ENCODE measurements at regions of chr22 and their contacts with region 1.

Region 1: GRCh38 chr22:41857155-41857859 is 24.4 kb downstream of the SREBF2 start:
- DNase-seq: peak; percentile 71 to 89 (median 72)
- H3K4me3 ChIP-seq: no peak overlapping the region
- H3K4me3 Mint-ChIP-seq: peak overlapping the region in 7 of 8 donors; percentile 0 to 64 (median 47)
- H3K27ac ChIP-seq: peak overlapping the region; percentile 40
- H3K27ac Mint-ChIP-seq: peak overlapping the region; percentile 71 to 96 (median 86)
- H3K4me1 ChIP-seq: peaks cover 53% of the 10 kb centered on the region
- H3K4me1 Mint-ChIP-seq: peaks cover 29 to 59% (median 44%) of the 10 kb centered on the region in 4 donors
- H3K27me3 ChIP-seq: no peaks in the 10 kb centered on the region
- H3K27me3 Mint-ChIP-seq: no peaks in the 10 kb centered on the region

Region 2: GRCh38 chr22:40334899-40335298 is 1522.4 kb before region 1 on chr22:
- CTCF ChIA-PET with region 1: no interaction called
- POLR2A ChIA-PET with region 1: no interaction called
- intact Hi-C with region 1: no loop called
- DNase-seq: peak in 4 of 5 donors; percentile 74 to 80 (median 75)
- H3K4me3 ChIP-seq: peak overlapping the region; percentile 8 to 9
- H3K4me3 Mint-ChIP-seq: peak overlapping the region; percentile 69 to 80 (median 76)
- H3K27ac ChIP-seq: peak overlapping the region; percentile 30
- H3K27ac Mint-ChIP-seq: peak overlapping the region; percentile 71 to 94 (median 77)
- H3K4me1 ChIP-seq: peaks cover 77% of the 10 kb centered on the region
- H3K4me1 Mint-ChIP-seq: peaks cover 69 to 97% (median 80%) of the 10 kb centered on the region in 4 donors
- H3K27me3 ChIP-seq: no peaks in the 10 kb centered on the region
- H3K27me3 Mint-ChIP-seq: no peaks in the 10 kb centered on the region

Region 3: GRCh38 chr22:41746567-41747400 is 110.5 kb before region 1 on chr22:
- CTCF ChIA-PET with region 1: interaction called, 40 read pairs
- POLR2A ChIA-PET with region 1: interaction called, 5 read pairs
- intact Hi-C with region 1: loop called (anchors 1 kb)
- DNase-seq: peak; percentile 48 to 66 (median 51)
- H3K4me3 ChIP-seq: no peak overlapping the region
- H3K4me3 Mint-ChIP-seq: no peak overlapping the region
- H3K27ac ChIP-seq: no peak overlapping the region
- H3K27ac Mint-ChIP-seq: peak overlapping the region in 1 of 7 donors; percentile 2
- H3K4me1 ChIP-seq: no peaks in the 10 kb centered on the region
- H3K4me1 Mint-ChIP-seq: peaks cover 0 to 5% (median 1%) of the 10 kb centered on the region in 4 donors
- H3K27me3 ChIP-seq: no peaks in the 10 kb centered on the region
- H3K27me3 Mint-ChIP-seq: peaks cover 0 to 2% of the 10 kb centered on the region in 2 donors

Region 4: DNA sequence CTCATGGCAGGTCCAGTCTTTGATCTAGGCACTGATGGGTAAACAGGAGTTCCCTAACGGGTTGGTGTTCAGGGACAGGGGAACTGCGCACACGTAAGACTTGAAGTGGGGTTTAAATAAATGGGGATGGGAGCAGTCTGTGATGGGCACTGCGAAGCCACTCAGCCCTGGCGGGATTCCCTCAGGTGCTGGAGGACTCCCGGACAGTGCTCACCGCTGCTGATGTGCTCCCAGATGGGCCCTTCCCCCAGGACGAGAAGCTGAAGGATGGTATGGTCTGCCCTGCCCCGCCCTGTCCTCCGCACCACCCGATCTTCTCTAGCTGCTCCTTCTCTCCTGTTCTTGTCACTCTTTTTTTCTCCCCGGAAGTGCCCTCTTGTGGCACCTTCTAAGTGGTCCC is 47.3 kb before region 1 on chr22:
- CTCF ChIA-PET with region 1: no interaction called
- POLR2A ChIA-PET with region 1: no interaction called
- intact Hi-C with region 1: no loop called
- DNase-seq: no peak
- H3K4me3 ChIP-seq: no peak overlapping the region
- H3K4me3 Mint-ChIP-seq: no peak overlapping the region
- H3K27ac ChIP-seq: no peak overlapping the region
- H3K27ac Mint-ChIP-seq: no peak overlapping the region
- H3K4me1 ChIP-seq: peaks cover under 1% of the 10 kb centered on the region
- H3K4me1 Mint-ChIP-seq: peaks cover 1 to 5% (median 2%) of the 10 kb centered on the region in 4 donors
- H3K27me3 ChIP-seq: no peaks in the 10 kb centered on the region
- H3K27me3 Mint-ChIP-seq: no peaks in the 10 kb centered on the region

Region 5: DNA sequence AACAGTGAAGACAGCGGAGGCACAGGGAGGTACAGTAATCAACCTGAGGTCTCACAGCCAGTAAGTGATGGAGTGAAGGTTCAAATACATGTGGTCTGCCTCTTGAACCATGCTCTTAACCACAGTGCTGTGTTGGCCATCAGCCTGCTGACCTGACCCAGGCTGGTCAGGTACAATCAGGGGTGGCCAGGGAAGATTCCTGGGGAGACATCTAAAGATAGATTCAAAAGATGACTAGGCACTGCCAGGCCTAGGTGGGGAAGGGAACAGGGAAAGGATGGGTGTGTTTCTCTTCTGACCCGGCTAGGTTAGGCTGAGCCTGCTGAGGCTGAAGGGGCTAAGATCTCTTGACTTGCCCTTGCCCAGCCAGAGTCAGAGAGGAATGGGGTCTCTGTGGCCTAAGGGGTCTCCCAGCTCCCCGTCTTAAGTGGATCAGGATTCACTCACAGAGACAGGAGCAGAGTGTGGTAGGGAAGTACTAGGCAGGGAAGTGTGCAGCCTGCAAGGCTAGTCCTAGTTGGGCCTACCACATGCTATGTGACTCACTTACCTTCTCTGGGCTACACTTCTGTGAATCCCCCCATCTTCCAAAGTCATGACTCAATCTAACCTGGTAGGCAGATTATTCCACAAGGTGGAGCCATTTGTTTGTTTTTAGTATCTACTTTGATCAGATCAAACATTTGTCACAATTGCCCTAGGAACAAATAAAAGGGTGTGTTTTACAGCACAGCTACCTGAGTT is 34.8 kb before region 1 on chr22:
- CTCF ChIA-PET with region 1: interaction called, 26 read pairs
- POLR2A ChIA-PET with region 1: interaction called, 4 read pairs
- intact Hi-C with region 1: loop called (anchors 1 kb)
- DNase-seq: peak; percentile 69 to 81 (median 72)
- H3K4me3 ChIP-seq: no peak overlapping the region
- H3K4me3 Mint-ChIP-seq: no peak overlapping the region
- H3K27ac ChIP-seq: peak overlapping the region; percentile 19
- H3K27ac Mint-ChIP-seq: peak overlapping the region; percentile 47 to 92 (median 76)
- H3K4me1 ChIP-seq: peaks cover 5% of the 10 kb centered on the region
- H3K4me1 Mint-ChIP-seq: peaks cover 5 to 14% (median 10%) of the 10 kb centered on the region in 4 donors
- H3K27me3 ChIP-seq: no peaks in the 10 kb centered on the region
- H3K27me3 Mint-ChIP-seq: no peaks in the 10 kb centered on the region

Region 6: GRCh38 chr22:41832553-41833368 is 24.5 kb before region 1 on chr22 and contains the start of gene SREBF2:
- CTCF ChIA-PET with region 1: interaction called, 14 read pairs
- POLR2A ChIA-PET with region 1: interaction called, 53 read pairs
- intact Hi-C with region 1: loop called (anchors 1 kb)
- DNase-seq: peak; percentile 97 to 99 (median 98)
- H3K4me3 ChIP-seq: peak within 1 kb of the TSS; percentile 36 to 93
- H3K4me3 Mint-ChIP-seq: peak within 1 kb of the TSS; percentile 92 to 97 (median 95)
- H3K27ac ChIP-seq: peak within 1 kb of the TSS; percentile 84
- H3K27ac Mint-ChIP-seq: peak within 1 kb of the TSS; percentile 98 to 100 (median 99)
- H3K4me1 ChIP-seq: peaks cover 26% of the 10 kb centered on the region
- H3K4me1 Mint-ChIP-seq: peaks cover 21 to 46% (median 31%) of the 10 kb centered on the region in 4 donors
- H3K27me3 ChIP-seq: no peaks in the 10 kb centered on the region
- H3K27me3 Mint-ChIP-seq: no peaks in the 10 kb centered on the region
- total RNA-seq, gene SREBF2: 109 to 112 TPM

Region 7: GRCh38 chr22:41841085-41841659 is 16.1 kb before region 1 on chr22:
- CTCF ChIA-PET with region 1: interaction called, 17 read pairs
- POLR2A ChIA-PET with region 1: interaction called, 53 read pairs
- intact Hi-C with region 1: loop called (anchors 2 kb)
- DNase-seq: no peak
- H3K4me3 ChIP-seq: no peak overlapping the region
- H3K4me3 Mint-ChIP-seq: no peak overlapping the region
- H3K27ac ChIP-seq: no peak overlapping the region
- H3K27ac Mint-ChIP-seq: peak overlapping the region in 2 of 7 donors; percentile 24 to 33
- H3K4me1 ChIP-seq: peaks cover 63% of the 10 kb centered on the region
- H3K4me1 Mint-ChIP-seq: peaks cover 57 to 82% (median 68%) of the 10 kb centered on the region in 4 donors
- H3K27me3 ChIP-seq: no peaks in the 10 kb centered on the region
- H3K27me3 Mint-ChIP-seq: no peaks in the 10 kb centered on the region

Region 8: DNA sequence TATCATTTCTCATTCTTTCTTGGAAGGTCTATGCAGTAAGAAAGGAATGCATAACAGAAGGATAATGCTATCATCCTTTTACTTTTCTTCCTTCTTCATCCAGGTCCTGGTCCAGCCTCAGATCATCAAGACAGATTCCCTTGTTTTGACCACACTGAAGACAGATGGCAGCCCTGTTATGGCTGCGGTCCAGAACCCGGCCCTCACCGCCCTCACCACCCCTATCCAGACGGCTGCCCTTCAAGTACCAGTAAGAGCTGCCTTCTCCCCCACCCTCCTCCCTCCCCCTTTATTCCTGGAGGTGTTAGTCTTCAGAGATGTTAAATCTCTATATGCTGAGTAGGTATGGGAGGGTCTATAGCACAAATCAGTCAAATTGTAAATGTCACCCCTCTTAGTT is 13.5 kb after region 1 on chr22:
- CTCF ChIA-PET with region 1: interaction called, 6 read pairs
- POLR2A ChIA-PET with region 1: interaction called, 10 read pairs
- intact Hi-C with region 1: no loop called
- DNase-seq: no peak
- H3K4me3 ChIP-seq: no peak overlapping the region
- H3K4me3 Mint-ChIP-seq: no peak overlapping the region
- H3K27ac ChIP-seq: no peak overlapping the region
- H3K27ac Mint-ChIP-seq: peak overlapping the region in 3 of 7 donors; percentile 43 to 88 (median 67)
- H3K4me1 ChIP-seq: peaks cover 6% of the 10 kb centered on the region
- H3K4me1 Mint-ChIP-seq: peaks cover 7 to 12% (median 11%) of the 10 kb centered on the region in 4 donors
- H3K27me3 ChIP-seq: no peaks in the 10 kb centered on the region
- H3K27me3 Mint-ChIP-seq: no peaks in the 10 kb centered on the region

Region 9: DNA sequence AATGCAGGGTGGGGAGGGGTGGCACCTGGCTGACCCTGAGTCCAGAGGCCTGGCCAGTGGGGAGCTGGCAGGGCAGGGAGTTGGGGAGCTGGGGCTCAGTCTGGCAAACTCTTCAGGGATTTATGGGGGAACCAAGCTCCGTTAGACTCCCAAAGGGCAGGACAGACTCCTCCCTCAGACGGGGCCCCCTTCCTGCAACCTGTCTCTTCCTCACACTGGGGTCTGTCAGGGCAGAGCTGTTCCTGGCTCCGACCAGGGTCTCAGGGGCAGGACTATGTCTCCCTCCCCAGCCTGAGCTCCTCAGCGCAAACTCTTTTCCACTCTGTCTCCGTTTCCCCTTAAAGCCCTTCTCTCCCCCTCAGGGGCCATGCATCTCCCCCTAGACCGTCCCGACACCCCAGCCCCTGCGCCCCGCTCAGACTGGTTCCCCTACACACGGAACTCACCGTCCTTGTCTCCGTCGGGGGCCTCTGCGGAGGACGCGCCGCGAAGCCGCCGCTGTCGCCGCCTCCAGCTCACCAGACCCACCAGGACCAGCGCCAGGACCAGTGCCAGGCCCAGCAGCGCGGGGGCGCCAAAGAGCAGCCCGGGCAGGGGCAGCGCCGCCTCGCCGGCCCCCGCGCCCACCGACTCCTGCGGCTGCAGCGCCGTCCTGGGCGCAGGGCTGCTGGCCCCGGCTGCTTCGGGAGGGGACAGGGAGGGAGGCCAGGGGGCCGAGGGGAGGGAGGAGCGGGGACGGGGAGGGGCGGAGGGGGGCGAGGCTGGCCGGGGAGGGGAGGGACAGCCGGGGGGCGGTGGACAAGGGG is 68.6 kb after region 1 on chr22:
- CTCF ChIA-PET with region 1: interaction called, 6 read pairs
- POLR2A ChIA-PET with region 1: interaction called, 5 read pairs
- intact Hi-C with region 1: loop called (anchors 5 kb)
- DNase-seq: peak; percentile 73 to 82 (median 77)
- H3K4me3 ChIP-seq: peak overlapping the region in 1 of 2 donors; percentile 43
- H3K4me3 Mint-ChIP-seq: peak overlapping the region; percentile 73 to 87 (median 82)
- H3K27ac ChIP-seq: no peak overlapping the region
- H3K27ac Mint-ChIP-seq: peak overlapping the region; percentile 57 to 83 (median 71)
- H3K4me1 ChIP-seq: peaks cover 15% of the 10 kb centered on the region
- H3K4me1 Mint-ChIP-seq: peaks cover 3 to 25% (median 9%) of the 10 kb centered on the region in 4 donors
- H3K27me3 ChIP-seq: no peaks in the 10 kb centered on the region
- H3K27me3 Mint-ChIP-seq: no peaks in the 10 kb centered on the region